ENCODE measurements at regions of chr17 and their contacts with region 1.

Region 1: GRCh38 chr17:50200457-50201275 is 765 bp downstream of the COL1A1 start:
- DNase-seq: peak; percentile 55
- ATAC-seq: peak; percentile 88
- H3K4me3 ChIP-seq: peak overlapping the region; percentile 54 to 75
- H3K27ac ChIP-seq: peak overlapping the region; percentile 71; the same call in 1 of the 2 replicates
- H3K4me1 ChIP-seq: peaks cover 11% of the 10 kb centered on the region
- H3K27me3 ChIP-seq: peaks cover 6% of the 10 kb centered on the region; the same call in 1 of the 2 replicates
- CTCF ChIP-seq: peak; percentile 100

Region 2: GRCh38 chr17:50169121-50169764 is 31.4 kb before region 1 on chr17:
- CTCF ChIA-PET with region 1: interaction called, 16 read pairs
- POLR2A ChIA-PET with region 1: no interaction called
- in situ Hi-C with region 1: no loop called
- intact Hi-C with region 1: loop called (anchors 1 kb)
- DNase-seq: peak; percentile 50
- ATAC-seq: peak; percentile 66
- H3K4me3 ChIP-seq: no peak overlapping the region
- H3K27ac ChIP-seq: no peak overlapping the region
- H3K4me1 ChIP-seq: 0 out of 2 replicates have a peak, but pooled peaks cover 3% of the 10 kb centered on the region
- H3K27me3 ChIP-seq: no peaks in the 10 kb centered on the region
- CTCF ChIP-seq: peak; percentile 94

Region 3: GRCh38 chr17:50258647-50259476 is 58.2 kb after region 1 on chr17:
- CTCF ChIA-PET with region 1: interaction called, 5 read pairs
- POLR2A ChIA-PET with region 1: no interaction called
- in situ Hi-C with region 1: loop called (anchors 10 kb)
- intact Hi-C with region 1: no loop called
- DNase-seq: no peak
- ATAC-seq: no peak
- H3K4me3 ChIP-seq: no peak overlapping the region
- H3K27ac ChIP-seq: no peak overlapping the region
- H3K4me1 ChIP-seq: no peaks in the 10 kb centered on the region; the same call in 1 of the 2 replicates
- H3K27me3 ChIP-seq: no peaks in the 10 kb centered on the region
- CTCF ChIP-seq: no peak

Region 4: DNA sequence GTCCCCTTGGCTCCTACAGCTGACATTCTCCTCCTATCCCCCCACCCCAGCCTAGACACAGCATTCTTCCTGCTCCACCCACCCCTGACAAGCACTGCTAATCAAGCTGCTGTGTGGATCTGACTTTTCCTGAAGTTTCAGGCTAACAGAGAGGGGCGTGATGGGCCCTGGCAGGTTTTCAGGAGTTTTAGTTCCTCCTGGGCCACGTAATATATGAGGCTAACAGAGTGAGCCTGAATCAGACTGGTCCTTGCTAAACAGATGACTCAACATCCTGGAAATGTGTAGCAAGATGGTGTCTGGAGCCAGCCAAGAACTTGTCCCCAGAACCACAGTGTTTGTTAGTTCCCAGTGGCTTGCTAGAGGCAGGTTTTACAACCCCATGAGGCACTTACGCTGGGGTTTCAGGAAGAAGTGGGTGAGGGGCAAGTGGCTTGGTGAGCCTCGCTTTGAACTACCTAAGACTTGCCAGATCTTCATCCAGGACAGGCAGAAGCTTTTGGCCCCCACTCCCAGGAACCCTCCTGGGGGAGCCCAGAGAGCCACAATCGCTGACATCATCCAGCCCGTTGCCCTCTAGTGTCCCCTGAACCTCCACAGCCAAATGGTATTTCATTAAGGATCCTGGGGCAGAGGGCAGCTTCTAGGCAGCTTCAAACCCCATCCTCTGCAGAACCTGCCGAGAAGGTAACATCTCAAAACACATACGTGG is 89.5 kb after region 1 on chr17:
- CTCF ChIA-PET with region 1: interaction called, 16 read pairs
- POLR2A ChIA-PET with region 1: no interaction called
- in situ Hi-C with region 1: no loop called
- intact Hi-C with region 1: no loop called
- DNase-seq: peak; percentile 57
- ATAC-seq: peak; percentile 84
- H3K4me3 ChIP-seq: no peak overlapping the region
- H3K27ac ChIP-seq: no peak overlapping the region
- H3K4me1 ChIP-seq: peaks cover 8% of the 10 kb centered on the region; the same call in 1 of the 2 replicates
- H3K27me3 ChIP-seq: no peaks in the 10 kb centered on the region
- CTCF ChIP-seq: no peak

Region 5: GRCh38 chr17:50312308-50312707 is 111.6 kb after region 1 on chr17:
- CTCF ChIA-PET with region 1: interaction called, 10 read pairs
- POLR2A ChIA-PET with region 1: no interaction called
- in situ Hi-C with region 1: no loop called
- intact Hi-C with region 1: no loop called
- DNase-seq: no peak
- ATAC-seq: no peak
- H3K4me3 ChIP-seq: no peak overlapping the region
- H3K27ac ChIP-seq: no peak overlapping the region
- H3K4me1 ChIP-seq: no peaks in the 10 kb centered on the region
- H3K27me3 ChIP-seq: peaks cover 4% of the 10 kb centered on the region; the same call in 1 of the 2 replicates
- CTCF ChIP-seq: no peak